B cell (primary cell): ENCODE measurements at regions of chr18 and their contacts with region 1.

Region 1: GRCh38 chr18:23259701-23260582 is 124.7 kb downstream of the CABLES1 start:
- DNase-seq: peak; percentile 45
- ATAC-seq: peak; percentile 73
- H3K4me3 ChIP-seq: peak overlapping the region in 4 of 5 experiments; percentile 15 to 41 (median 38)
- H3K4me3 Mint-ChIP-seq: peak overlapping the region; percentile 84
- H3K27ac ChIP-seq: no peak overlapping the region
- H3K27ac Mint-ChIP-seq: peak overlapping the region; percentile 85
- H3K4me1 ChIP-seq: peaks cover 23 to 26% of the 10 kb centered on the region in 2 donors
- H3K4me1 Mint-ChIP-seq: peaks cover 42% of the 10 kb centered on the region
- H3K27me3 ChIP-seq: peaks cover 0 to 13% (median 0%) of the 10 kb centered on the region in 4 experiments
- H3K27me3 Mint-ChIP-seq: peaks cover 3% of the 10 kb centered on the region
- CTCF ChIP-seq: no peak

Region 2: DNA sequence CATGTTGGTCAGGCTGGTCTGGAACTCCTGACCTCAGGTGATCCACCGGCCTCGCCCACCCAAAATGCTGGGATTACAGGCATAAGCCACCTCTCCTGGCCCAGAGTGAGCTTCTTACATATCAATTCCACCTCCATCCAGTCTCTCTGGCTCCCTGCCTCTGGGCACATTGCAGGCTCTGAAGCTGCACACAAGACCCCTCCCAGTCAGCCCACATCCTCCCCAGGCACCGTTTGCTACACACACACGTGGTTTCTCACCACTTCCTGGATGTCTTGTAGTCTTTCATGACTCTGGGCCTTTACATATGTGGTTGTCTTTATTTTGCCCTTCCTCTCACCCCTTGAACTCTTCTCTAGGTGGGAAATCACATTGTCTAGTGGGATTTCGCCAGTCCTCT is 188.7 kb before region 1 on chr18:
- CTCF ChIA-PET with region 1: no interaction called
- POLR2A ChIA-PET with region 1: no interaction called
- intact Hi-C with region 1: no loop called
- DNase-seq: peak; percentile 76
- ATAC-seq: peak; percentile 90
- H3K4me3 ChIP-seq: no peak overlapping the region
- H3K4me3 Mint-ChIP-seq: peak overlapping the region; percentile 70
- H3K27ac ChIP-seq: peak overlapping the region in 1 of 2 donors; percentile 22
- H3K27ac Mint-ChIP-seq: peak overlapping the region; percentile 86
- H3K4me1 ChIP-seq: peaks cover 53 to 60% of the 10 kb centered on the region in 2 donors
- H3K4me1 Mint-ChIP-seq: peaks cover 59% of the 10 kb centered on the region
- H3K27me3 ChIP-seq: no peaks in the 10 kb centered on the region
- H3K27me3 Mint-ChIP-seq: no peaks in the 10 kb centered on the region
- CTCF ChIP-seq: no peak

Region 3: GRCh38 chr18:23237524-23238151 is 22.3 kb before region 1 on chr18:
- CTCF ChIA-PET with region 1: interaction called, 8 read pairs
- POLR2A ChIA-PET with region 1: interaction called, 19 read pairs
- intact Hi-C with region 1: loop called (anchors 2 kb)
- DNase-seq: peak; percentile 69
- ATAC-seq: peak; percentile 59
- H3K4me3 ChIP-seq: peak overlapping the region in 4 of 5 experiments; percentile 22 to 55 (median 26)
- H3K4me3 Mint-ChIP-seq: peak overlapping the region; percentile 80
- H3K27ac ChIP-seq: no peak overlapping the region
- H3K27ac Mint-ChIP-seq: peak overlapping the region; percentile 54
- H3K4me1 ChIP-seq: peaks cover 14 to 19% of the 10 kb centered on the region in 2 donors
- H3K4me1 Mint-ChIP-seq: peaks cover 37% of the 10 kb centered on the region
- H3K27me3 ChIP-seq: peaks cover 0 to 2% (median 0%) of the 10 kb centered on the region in 4 experiments
- H3K27me3 Mint-ChIP-seq: peaks cover 4% of the 10 kb centered on the region
- CTCF ChIP-seq: no peak

Region 4: DNA sequence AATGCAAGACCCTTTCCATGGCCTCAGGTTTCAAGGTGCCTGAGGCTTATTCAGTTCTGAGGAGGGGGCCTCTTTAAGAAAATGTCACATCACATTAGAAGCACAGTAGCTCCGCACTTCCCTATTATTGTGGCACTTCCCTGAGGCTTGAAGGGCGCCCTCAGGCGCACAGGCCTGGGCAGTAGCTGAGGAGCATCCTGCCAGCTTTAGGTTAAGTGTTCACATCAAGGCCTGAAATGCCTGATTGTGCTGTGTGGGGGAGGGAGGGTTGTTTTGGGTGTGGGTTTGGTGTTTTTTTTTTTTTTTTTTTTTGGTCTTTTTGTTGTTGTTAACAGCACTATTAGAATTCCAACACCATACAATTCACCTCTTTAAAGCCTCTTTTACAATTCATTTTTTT is 16.8 kb before region 1 on chr18:
- CTCF ChIA-PET with region 1: interaction called, 8 read pairs
- POLR2A ChIA-PET with region 1: interaction called, 19 read pairs
- intact Hi-C with region 1: loop called (anchors 2 kb)
- DNase-seq: peak; percentile 46
- ATAC-seq: no peak
- H3K4me3 ChIP-seq: no peak overlapping the region
- H3K4me3 Mint-ChIP-seq: no peak overlapping the region
- H3K27ac ChIP-seq: no peak overlapping the region
- H3K27ac Mint-ChIP-seq: no peak overlapping the region
- H3K4me1 ChIP-seq: peaks cover 3 to 8% of the 10 kb centered on the region in 2 donors
- H3K4me1 Mint-ChIP-seq: peaks cover 26% of the 10 kb centered on the region
- H3K27me3 ChIP-seq: no peaks in the 10 kb centered on the region
- H3K27me3 Mint-ChIP-seq: peaks cover 4% of the 10 kb centered on the region
- CTCF ChIP-seq: no peak

Region 5: GRCh38 chr18:23406271-23406787 is 146.4 kb after region 1 on chr18:
- CTCF ChIA-PET with region 1: no interaction called
- POLR2A ChIA-PET with region 1: no interaction called
- intact Hi-C with region 1: no loop called
- DNase-seq: no peak
- ATAC-seq: no peak
- H3K4me3 ChIP-seq: no peak overlapping the region
- H3K4me3 Mint-ChIP-seq: no peak overlapping the region
- H3K27ac ChIP-seq: no peak overlapping the region
- H3K27ac Mint-ChIP-seq: no peak overlapping the region
- H3K4me1 ChIP-seq: no peaks in the 10 kb centered on the region
- H3K4me1 Mint-ChIP-seq: no peaks in the 10 kb centered on the region
- H3K27me3 ChIP-seq: no peaks in the 10 kb centered on the region
- H3K27me3 Mint-ChIP-seq: no peaks in the 10 kb centered on the region
- CTCF ChIP-seq: no peak